ENCODE measurements at regions of chr3 and their contacts with region 1.

Region 1: GRCh38 chr3:186534113-186534669 is 10.0 kb downstream of the CRYGS start:
- DNase-seq: peak; percentile 73
- ATAC-seq: peak; percentile 87
- H3K4me3 Mint-ChIP-seq: peak overlapping the region; percentile 49
- H3K27ac Mint-ChIP-seq: peak overlapping the region; percentile 96
- H3K4me1 Mint-ChIP-seq: peaks cover 92% of the 10 kb centered on the region
- H3K27me3 Mint-ChIP-seq: no peaks in the 10 kb centered on the region
- CTCF ChIP-seq: no peak

Region 2: DNA sequence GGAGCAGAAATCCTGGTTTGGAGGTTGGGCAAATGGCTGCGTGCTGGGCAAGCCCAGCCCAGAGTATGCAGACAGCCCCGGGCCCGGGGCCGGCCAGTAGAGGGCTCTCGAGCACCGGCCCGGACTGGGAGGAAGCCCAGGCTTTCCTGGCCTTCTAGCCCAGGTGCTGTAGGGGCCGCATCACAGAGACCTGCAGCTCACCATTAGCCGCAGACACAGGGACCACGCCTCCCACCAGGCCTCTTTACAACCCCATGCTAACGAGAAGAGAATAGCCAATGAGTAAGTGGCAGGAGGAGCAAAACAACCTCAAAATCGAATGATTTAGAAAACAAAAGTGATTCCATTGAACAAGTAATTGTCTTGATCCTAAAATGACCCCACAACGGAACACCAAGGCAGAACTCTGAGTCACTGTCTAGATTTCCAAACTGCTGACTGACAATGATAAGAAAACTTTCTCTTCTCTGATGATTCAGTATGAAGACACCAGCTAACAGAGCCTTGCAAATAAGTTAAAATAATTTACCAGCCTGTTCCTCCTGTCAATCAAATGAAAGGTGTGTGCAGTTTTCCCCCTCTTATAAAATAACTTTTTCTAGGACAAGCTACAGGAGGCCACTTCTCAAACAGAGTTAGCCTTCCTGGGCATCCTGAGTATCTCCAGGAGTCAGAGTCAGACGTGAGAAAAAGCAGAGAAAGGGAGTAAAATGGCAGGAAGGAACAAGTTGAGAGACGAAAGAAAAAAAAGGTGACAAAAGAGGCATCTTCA is 274.4 kb before region 1 on chr3:
- CTCF ChIA-PET with region 1: interaction called, 147 read pairs
- POLR2A ChIA-PET with region 1: interaction called, 7 read pairs
- intact Hi-C with region 1: no loop called
- DNase-seq: peak; percentile 78
- ATAC-seq: peak; percentile 88
- H3K4me3 Mint-ChIP-seq: peak overlapping the region; percentile 15
- H3K27ac Mint-ChIP-seq: peak overlapping the region; percentile 56
- H3K4me1 Mint-ChIP-seq: peaks cover 20% of the 10 kb centered on the region
- H3K27me3 Mint-ChIP-seq: peaks cover 2% of the 10 kb centered on the region
- CTCF ChIP-seq: peak; percentile 71

Region 3: DNA sequence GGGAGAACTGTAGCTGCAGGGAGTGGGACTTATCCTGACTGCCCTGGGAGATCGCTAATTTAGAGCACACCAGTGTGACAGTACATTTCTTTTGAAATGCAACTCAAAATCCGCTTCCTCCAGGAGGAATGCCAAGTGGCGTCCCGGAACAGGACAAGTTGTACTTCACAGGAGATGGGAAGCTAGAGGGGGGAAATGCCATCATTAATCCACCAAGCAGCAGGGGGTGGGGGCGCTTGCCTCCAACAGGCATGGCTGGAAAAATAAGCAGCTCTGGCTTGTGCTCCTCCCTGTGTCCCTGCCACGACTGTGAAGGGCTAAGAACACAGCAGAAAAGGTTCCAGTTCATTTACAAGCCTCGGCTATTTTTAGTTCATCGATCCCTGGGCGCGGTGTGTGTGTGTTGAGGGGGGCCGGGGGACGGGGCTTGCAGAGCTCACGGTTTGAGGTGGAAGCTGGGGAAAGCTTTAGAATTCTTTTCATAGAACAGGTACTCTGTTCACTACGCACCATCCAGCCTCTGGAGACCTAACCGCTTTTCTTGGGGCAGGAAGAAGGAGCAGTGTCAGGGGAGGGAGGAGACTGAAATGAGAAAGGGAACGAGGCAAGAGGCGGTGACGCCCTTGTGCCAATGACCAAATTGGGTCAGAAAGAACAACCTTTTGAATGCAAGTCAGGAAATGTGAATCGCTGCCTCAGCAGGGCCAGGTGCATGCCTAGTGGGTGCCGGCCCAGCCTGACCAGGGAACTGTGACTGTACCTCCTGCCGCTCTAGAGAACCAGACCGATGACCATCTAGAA is 120.4 kb before region 1 on chr3:
- CTCF ChIA-PET with region 1: interaction called, 9 read pairs
- POLR2A ChIA-PET with region 1: interaction called, 3 read pairs
- intact Hi-C with region 1: loop called (anchors 10 kb)
- DNase-seq: peak; percentile 47
- ATAC-seq: peak; percentile 57
- H3K4me3 Mint-ChIP-seq: peak overlapping the region; percentile 65
- H3K27ac Mint-ChIP-seq: peak overlapping the region; percentile 39
- H3K4me1 Mint-ChIP-seq: peaks cover 35% of the 10 kb centered on the region
- H3K27me3 Mint-ChIP-seq: peaks cover 24% of the 10 kb centered on the region
- CTCF ChIP-seq: no peak

Region 4: GRCh38 chr3:186464424-186465093 is 69.6 kb before region 1 on chr3:
- CTCF ChIA-PET with region 1: interaction called, 9 read pairs
- POLR2A ChIA-PET with region 1: no interaction called
- intact Hi-C with region 1: loop called (anchors 5 kb)
- DNase-seq: no peak
- ATAC-seq: peak; percentile 42
- H3K4me3 Mint-ChIP-seq: no peak overlapping the region
- H3K27ac Mint-ChIP-seq: no peak overlapping the region
- H3K4me1 Mint-ChIP-seq: peaks cover 5% of the 10 kb centered on the region
- H3K27me3 Mint-ChIP-seq: no peaks in the 10 kb centered on the region
- CTCF ChIP-seq: no peak

Region 5: GRCh38 chr3:186514296-186515002 is 19.7 kb before region 1 on chr3:
- CTCF ChIA-PET with region 1: interaction called, 82 read pairs
- POLR2A ChIA-PET with region 1: interaction called, 32 read pairs
- intact Hi-C with region 1: loop called (anchors 2 kb)
- DNase-seq: peak; percentile 25
- ATAC-seq: peak; percentile 40
- H3K4me3 Mint-ChIP-seq: no peak overlapping the region
- H3K27ac Mint-ChIP-seq: peak overlapping the region; percentile 0
- H3K4me1 Mint-ChIP-seq: peaks cover 68% of the 10 kb centered on the region
- H3K27me3 Mint-ChIP-seq: no peaks in the 10 kb centered on the region
- CTCF ChIP-seq: no peak

Region 6: GRCh38 chr3:186520957-186521842 is 13.0 kb before region 1 on chr3:
- CTCF ChIA-PET with region 1: interaction called, 82 read pairs
- POLR2A ChIA-PET with region 1: interaction called, 32 read pairs
- intact Hi-C with region 1: no loop called
- DNase-seq: peak; percentile 78
- ATAC-seq: peak; percentile 53
- H3K4me3 Mint-ChIP-seq: no peak overlapping the region
- H3K27ac Mint-ChIP-seq: peak overlapping the region; percentile 11
- H3K4me1 Mint-ChIP-seq: peaks cover 54% of the 10 kb centered on the region
- H3K27me3 Mint-ChIP-seq: no peaks in the 10 kb centered on the region
- CTCF ChIP-seq: no peak

Region 7: DNA sequence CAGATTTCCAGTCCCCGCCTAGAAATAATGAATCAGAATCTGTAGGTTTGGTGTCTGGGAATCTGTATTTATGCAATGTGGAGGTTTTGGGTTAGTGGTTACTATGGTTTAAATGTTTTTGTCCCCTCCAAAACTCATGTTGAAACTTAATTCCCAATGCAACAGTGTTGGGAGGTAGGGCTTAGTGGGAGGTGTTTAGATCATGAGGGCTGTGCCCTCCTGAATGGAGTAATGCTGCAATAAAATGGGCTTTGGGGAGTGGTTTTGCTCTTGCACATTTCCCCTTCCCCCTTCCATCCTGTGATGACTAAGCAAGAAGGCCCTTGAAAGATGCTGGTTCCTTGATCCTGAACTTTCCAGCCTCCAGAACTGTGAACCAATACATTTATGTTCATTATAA is 281.2 kb after region 1 on chr3:
- CTCF ChIA-PET with region 1: no interaction called
- POLR2A ChIA-PET with region 1: no interaction called
- intact Hi-C with region 1: no loop called
- DNase-seq: no peak
- ATAC-seq: no peak
- H3K4me3 Mint-ChIP-seq: no peak overlapping the region
- H3K27ac Mint-ChIP-seq: no peak overlapping the region
- H3K4me1 Mint-ChIP-seq: peaks cover 6% of the 10 kb centered on the region
- H3K27me3 Mint-ChIP-seq: peaks cover 1% of the 10 kb centered on the region
- CTCF ChIP-seq: no peak

Region 8: GRCh38 chr3:187082758-187083375 is 548.7 kb after region 1 on chr3:
- CTCF ChIA-PET with region 1: no interaction called
- POLR2A ChIA-PET with region 1: no interaction called
- intact Hi-C with region 1: no loop called
- DNase-seq: no peak
- ATAC-seq: no peak
- H3K4me3 Mint-ChIP-seq: no peak overlapping the region
- H3K27ac Mint-ChIP-seq: no peak overlapping the region
- H3K4me1 Mint-ChIP-seq: peaks cover 12% of the 10 kb centered on the region
- H3K27me3 Mint-ChIP-seq: no peaks in the 10 kb centered on the region
- CTCF ChIP-seq: no peak

Measured in activated CD8-positive, alpha-beta T cell treated with anti-CD3 and anti-CD28 coated beads for 36 hours (primary cell).